Calu3 (cell line): ENCODE measurements at regions of chr5 and their contacts with region 1.

Region 1: DNA sequence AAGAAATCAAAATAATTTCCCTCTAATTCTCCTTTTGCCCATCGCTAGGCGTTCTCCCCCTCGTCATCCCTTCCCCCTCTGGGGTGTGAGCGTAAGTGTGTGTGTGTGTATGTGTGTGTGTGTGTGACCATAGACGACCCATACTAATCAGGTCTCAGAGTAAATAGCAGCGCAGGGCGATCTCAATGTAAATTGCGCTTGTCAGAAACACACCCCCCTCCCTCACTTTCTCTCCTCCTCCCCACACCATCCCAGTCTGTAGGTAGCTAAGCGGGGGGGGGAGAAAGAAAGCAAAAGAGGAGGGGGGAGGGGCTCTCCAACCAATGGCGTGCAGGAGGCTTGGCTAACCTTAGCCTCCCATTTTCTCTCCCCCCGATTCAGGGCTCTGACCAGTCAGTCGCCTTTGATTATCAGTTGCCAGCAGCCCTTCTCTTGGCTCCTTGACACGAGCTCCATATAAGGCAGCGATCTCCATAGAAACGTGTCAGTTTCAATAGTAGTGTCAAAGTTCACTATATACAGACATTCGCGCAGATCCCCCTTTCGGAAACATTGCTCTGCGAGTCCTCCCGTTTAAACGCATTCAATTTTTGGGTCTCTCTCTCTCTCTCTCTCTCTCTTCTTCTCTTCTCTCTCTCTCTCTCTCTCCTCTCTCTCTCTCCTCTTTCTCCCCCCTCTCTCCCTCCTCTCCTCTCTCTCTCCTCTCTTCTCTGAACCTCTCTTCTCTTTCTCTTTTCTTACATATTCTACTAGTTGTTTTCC is at the start of gene NR2F1:
- DNase-seq: peak; percentile 88
- H3K4me3 Mint-ChIP-seq: no peak within 1 kb of the TSS
- H3K27ac Mint-ChIP-seq: no peak within 1 kb of the TSS
- H3K4me1 Mint-ChIP-seq: no peaks in the 10 kb centered on the region
- H3K27me3 Mint-ChIP-seq: no peaks in the 10 kb centered on the region
- CTCF ChIP-seq: no peak
- total RNA-seq, gene NR2F1: 25.1 and 29.1 TPM in 2 replicates

Region 2: DNA sequence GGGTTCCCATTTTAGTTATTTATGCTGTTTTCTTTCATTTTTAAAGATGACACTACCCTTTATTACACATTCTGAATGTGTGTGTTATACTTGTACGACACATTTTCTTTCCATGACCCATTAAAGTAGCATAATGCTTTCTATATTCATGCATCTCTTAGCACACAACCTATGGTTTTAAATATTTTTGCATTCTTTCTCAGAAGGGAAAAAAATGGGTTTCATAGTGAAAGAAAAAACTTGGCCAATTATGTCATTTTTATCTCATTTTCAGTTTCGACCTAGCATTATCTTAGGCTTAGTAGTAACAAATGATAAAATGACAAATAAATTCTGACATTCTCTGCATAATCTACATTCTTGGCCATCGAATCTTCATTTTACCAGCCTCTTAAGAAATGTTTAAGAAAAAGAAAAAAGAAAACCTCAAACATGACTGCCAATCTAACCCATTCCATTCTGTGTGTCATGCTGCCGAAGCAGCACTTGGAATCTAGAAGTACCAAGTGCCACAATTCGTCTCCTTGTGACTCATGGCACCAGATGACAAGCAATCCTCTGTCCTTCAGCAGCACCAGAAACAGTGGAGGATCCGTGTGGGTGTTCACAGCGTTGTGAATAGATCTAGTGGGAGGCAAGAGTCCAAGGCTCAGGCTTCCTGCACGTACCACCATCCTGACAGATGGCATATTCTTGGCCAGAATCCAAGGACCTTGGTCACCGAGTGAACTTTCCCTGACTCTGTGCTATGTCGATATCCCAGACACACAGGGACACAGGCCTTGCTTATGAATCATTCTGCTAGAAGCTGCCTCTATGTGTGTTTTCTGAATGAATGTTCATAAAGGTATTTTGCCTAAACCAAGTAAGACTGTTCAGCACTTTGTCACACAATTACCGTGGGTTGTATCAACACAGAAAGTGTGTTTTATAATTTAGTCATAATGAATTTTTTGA is 504.5 kb before region 1 on chr5:
- CTCF ChIA-PET with region 1: no interaction called
- intact Hi-C with region 1: loop called (anchors 5 kb)
- DNase-seq: peak; percentile 95
- H3K4me3 Mint-ChIP-seq: peak overlapping the region; percentile 61
- H3K27ac Mint-ChIP-seq: peak overlapping the region; percentile 83
- H3K4me1 Mint-ChIP-seq: peaks cover 45% of the 10 kb centered on the region
- H3K27me3 Mint-ChIP-seq: no peaks in the 10 kb centered on the region
- CTCF ChIP-seq: no peak

Region 3: DNA sequence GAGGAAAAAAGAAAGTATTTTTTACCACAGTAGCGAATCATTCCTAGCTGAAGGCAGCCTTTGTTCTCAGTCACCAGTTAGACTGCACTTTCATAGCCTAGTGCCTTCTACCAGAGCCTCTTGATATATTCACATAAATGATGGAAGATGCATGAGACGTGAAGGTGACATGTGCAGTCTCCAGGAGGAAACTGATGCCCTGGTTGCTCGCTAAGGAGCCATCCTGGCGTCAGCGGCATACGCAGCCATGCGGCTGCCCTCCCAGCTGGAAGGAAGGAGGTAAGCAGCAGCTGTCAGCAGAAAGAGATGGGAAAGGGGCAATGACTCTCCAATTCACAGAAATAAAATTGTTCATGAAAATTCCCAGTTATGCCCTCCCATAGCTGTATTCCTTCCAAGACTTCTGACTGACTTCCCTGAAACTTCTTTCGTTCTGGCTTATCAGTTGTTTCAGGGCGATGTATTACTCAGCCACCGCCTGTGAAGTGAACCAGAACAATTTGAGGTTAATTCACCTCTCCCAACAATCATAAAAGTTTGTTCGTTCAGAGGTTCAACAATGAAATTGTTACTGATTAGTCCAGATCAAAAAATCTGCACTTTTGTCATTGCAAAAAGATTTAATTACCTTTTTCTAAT is 333.1 kb before region 1 on chr5:
- CTCF ChIA-PET with region 1: no interaction called
- intact Hi-C with region 1: loop called (anchors 10 kb)
- DNase-seq: peak; percentile 33
- H3K4me3 Mint-ChIP-seq: peak overlapping the region; percentile 65
- H3K27ac Mint-ChIP-seq: peak overlapping the region; percentile 9
- H3K4me1 Mint-ChIP-seq: no peaks in the 10 kb centered on the region
- H3K27me3 Mint-ChIP-seq: no peaks in the 10 kb centered on the region
- CTCF ChIP-seq: no peak

Region 4: DNA sequence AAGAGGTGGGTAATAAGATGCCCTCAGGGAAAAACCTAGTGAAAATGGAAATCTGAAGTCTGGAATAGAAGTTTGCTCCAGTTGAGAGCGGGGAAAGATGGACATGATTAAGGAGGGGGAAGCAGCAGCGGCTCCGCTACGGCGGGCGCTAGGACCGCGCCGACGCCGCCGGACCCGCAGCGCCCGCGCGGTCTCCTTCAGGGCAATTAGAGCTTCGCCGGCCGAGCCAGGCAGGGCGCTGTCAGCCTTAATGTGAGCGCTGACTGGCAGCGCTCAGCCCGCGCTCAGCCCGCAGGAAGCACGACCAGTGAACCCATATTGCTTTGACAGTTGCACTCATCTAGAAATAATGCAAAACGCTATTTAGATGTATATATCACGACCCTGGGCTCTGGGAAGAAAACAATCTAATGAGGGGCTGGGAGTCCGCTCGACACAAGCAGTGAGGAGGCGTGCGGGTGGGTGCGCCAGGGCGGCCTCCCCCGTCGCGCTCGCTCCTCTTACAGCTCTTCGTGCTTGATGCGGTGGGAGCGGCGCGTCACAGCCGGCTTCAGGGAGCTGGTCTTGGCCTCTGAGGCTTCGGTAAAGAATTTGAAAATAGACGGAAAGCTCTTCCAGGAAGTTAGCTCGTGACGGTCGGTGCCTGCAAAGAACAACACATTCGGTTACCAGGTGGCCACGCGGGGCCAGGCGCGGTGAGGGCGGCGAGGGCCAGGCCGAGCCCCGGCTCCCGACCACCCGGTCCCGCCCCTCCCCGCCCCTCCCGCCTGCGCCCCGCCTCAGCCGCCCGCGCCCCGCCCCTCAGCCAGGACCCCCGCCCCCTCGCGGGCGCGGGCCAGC is 37.8 kb after region 1 on chr5:
- CTCF ChIA-PET with region 1: interaction called, 7 read pairs
- intact Hi-C with region 1: loop called (anchors 5 kb)
- DNase-seq: peak; percentile 82
- H3K4me3 Mint-ChIP-seq: peak overlapping the region; percentile 91
- H3K27ac Mint-ChIP-seq: peak overlapping the region; percentile 45
- H3K4me1 Mint-ChIP-seq: peaks cover 8% of the 10 kb centered on the region
- H3K27me3 Mint-ChIP-seq: no peaks in the 10 kb centered on the region
- CTCF ChIP-seq: no peak

Region 5: GRCh38 chr5:93658044-93658443 is 75.2 kb after region 1 on chr5:
- CTCF ChIA-PET with region 1: no interaction called
- intact Hi-C with region 1: no loop called
- DNase-seq: no peak
- H3K4me3 Mint-ChIP-seq: no peak overlapping the region
- H3K27ac Mint-ChIP-seq: no peak overlapping the region
- H3K4me1 Mint-ChIP-seq: no peaks in the 10 kb centered on the region
- H3K27me3 Mint-ChIP-seq: no peaks in the 10 kb centered on the region
- CTCF ChIP-seq: no peak

Region 6: DNA sequence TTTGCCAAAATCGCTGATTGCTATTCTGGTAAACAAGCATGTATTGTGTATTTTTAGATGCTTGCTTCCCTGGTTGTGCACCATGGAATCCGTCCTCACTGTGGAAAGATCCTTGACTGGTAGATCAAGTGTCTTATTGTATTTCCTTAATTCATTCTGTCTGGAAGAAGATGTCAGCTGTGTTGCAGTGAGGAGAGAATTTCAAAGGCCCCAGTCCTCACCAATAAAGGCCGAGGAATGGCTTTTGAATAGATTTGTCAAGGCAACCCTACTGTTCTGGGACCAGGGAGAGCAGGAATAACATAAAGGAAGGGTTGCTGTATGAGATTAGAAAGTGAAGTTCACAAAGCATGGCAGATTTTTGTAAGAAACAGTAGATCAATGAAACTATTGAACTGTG is 194.8 kb after region 1 on chr5:
- CTCF ChIA-PET with region 1: no interaction called
- intact Hi-C with region 1: no loop called
- DNase-seq: no peak
- H3K4me3 Mint-ChIP-seq: no peak overlapping the region
- H3K27ac Mint-ChIP-seq: no peak overlapping the region
- H3K4me1 Mint-ChIP-seq: no peaks in the 10 kb centered on the region
- H3K27me3 Mint-ChIP-seq: no peaks in the 10 kb centered on the region
- CTCF ChIP-seq: no peak

Region 7: GRCh38 chr5:93800988-93801811 is 218.3 kb after region 1 on chr5:
- CTCF ChIA-PET with region 1: interaction called, 13 read pairs
- intact Hi-C with region 1: loop called (anchors 1 kb)
- DNase-seq: peak; percentile 58
- H3K4me3 Mint-ChIP-seq: no peak overlapping the region
- H3K27ac Mint-ChIP-seq: peak overlapping the region; percentile 55
- H3K4me1 Mint-ChIP-seq: peaks cover 15% of the 10 kb centered on the region
- H3K27me3 Mint-ChIP-seq: no peaks in the 10 kb centered on the region
- CTCF ChIP-seq: peak; percentile 84

Region 8: DNA sequence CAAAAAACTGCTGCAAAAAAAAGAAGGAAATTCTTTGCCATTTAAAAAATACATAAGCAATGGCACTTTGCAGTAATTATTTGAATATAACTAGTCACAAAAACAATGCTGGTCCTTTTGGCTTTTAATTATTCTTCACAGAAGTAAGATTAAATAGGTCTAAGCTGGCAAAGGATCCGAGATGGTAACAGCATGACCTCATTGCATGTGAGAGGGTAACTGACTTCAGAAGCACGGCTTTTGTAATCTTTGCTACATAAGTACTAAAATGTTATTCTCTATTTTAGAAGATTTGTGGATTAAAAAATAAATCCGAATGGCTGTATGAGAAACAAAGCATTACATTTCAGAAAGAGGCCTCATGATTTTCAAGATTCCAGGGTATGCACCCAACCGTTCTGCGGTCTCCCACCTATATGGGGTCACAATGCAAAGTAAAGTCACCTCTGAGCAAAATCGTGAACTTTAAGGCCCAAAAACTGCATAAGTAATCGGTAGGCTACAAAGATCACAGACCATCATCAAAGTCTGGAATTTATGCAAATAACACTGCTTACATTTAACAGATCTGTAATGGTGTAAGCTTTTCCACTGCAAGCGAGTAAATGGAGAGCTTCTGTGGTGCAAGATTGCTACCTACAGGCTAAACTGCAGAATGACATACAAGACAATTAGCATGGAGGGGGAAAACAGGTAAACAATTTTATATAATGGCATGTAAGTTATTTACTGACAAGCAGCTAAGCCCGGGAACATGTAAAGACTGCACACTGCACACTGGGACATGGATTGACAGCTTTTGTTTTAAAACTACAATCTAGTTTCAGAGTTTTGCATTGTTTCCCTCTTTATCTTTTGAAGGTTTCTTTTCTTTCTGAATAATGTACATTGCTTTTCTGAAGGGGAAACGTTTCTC is 1267.2 kb after region 1 on chr5:
- CTCF ChIA-PET with region 1: no interaction called
- intact Hi-C with region 1: loop called (anchors 10 kb)
- DNase-seq: peak; percentile 19
- H3K4me3 Mint-ChIP-seq: no peak overlapping the region
- H3K27ac Mint-ChIP-seq: no peak overlapping the region
- H3K4me1 Mint-ChIP-seq: no peaks in the 10 kb centered on the region
- H3K27me3 Mint-ChIP-seq: no peaks in the 10 kb centered on the region
- CTCF ChIP-seq: peak; percentile 62